ENCODE measurements at regions of chr1 and their contacts with region 1.

Region 1: DNA sequence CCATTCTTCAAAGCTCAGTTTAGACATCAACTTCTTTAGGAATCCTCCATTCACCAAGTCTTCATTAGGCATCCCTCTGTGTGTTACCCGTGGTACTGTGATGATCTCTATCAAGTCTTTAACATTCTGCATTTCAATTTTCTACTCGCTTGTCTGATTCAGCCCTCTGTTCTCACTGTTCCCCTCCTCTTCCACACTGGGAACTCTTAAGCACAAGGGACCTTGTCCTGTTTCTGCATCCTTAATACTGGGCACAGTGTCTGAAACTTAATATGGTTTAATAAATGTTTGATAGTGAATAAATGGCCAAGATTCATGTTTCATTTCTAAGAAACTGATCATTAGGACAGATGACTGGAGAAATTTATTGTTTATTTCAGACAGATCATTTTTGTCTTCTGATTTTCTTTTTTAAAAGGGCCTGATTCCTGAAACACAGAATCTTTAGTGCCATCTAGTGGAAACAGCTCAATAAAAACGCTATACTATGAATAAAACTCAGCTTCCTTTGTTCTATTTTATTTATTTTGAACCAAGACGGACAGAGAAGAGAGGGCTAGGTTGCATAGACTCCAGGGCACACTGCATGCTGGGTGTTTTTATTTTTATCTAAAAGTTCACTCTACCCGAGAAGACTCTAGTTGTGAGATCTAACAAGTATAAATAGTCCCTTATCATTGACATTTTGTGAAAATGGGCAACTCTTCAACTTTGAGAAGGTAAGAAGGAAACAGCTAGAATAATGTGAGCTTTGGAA is 7.0 kb upstream of the TRIM45 start:
- DNase-seq: no peak
- ATAC-seq: no peak
- H3K4me3 ChIP-seq: no peak overlapping the region
- H3K27ac ChIP-seq: no peak overlapping the region
- H3K4me1 ChIP-seq: no peaks in the 10 kb centered on the region
- H3K27me3 ChIP-seq: no peaks in the 10 kb centered on the region
- CTCF ChIP-seq: peak; percentile 22
- EP300 ChIP-seq: no peak
- POLR2A ChIP-seq: no peak
- RAD21 ChIP-seq: no peak

Region 2: GRCh38 chr1:117067533-117068370 is 60.7 kb before region 1 on chr1:
- CTCF ChIA-PET with region 1: interaction called, 23 read pairs
- POLR2A ChIA-PET with region 1: no interaction called
- in situ Hi-C with region 1: no loop called
- intact Hi-C with region 1: loop called (anchors 1 kb)
- DNase-seq: peak; percentile 34
- ATAC-seq: peak; percentile 94
- H3K4me3 ChIP-seq: no peak overlapping the region
- H3K27ac ChIP-seq: no peak overlapping the region
- H3K4me1 ChIP-seq: no peaks in the 10 kb centered on the region
- H3K27me3 ChIP-seq: no peaks in the 10 kb centered on the region
- CTCF ChIP-seq: peak; percentile 88
- EP300 ChIP-seq: no peak
- POLR2A ChIP-seq: no peak
- RAD21 ChIP-seq: peak; percentile 65; the same call in 1 of the 2 replicates

Region 3: GRCh38 chr1:117096871-117097842 is 31.3 kb before region 1 on chr1:
- CTCF ChIA-PET with region 1: no interaction called
- POLR2A ChIA-PET with region 1: no interaction called
- in situ Hi-C with region 1: no loop called
- intact Hi-C with region 1: no loop called
- DNase-seq: no peak
- ATAC-seq: no peak
- H3K4me3 ChIP-seq: no peak overlapping the region
- H3K27ac ChIP-seq: no peak overlapping the region
- H3K4me1 ChIP-seq: no peaks in the 10 kb centered on the region
- H3K27me3 ChIP-seq: no peaks in the 10 kb centered on the region
- CTCF ChIP-seq: no peak
- EP300 ChIP-seq: no peak
- POLR2A ChIP-seq: no peak
- RAD21 ChIP-seq: no peak

Region 4: GRCh38 chr1:117237696-117238381 is 109.3 kb after region 1 on chr1:
- CTCF ChIA-PET with region 1: no interaction called
- POLR2A ChIA-PET with region 1: no interaction called
- in situ Hi-C with region 1: no loop called
- intact Hi-C with region 1: no loop called
- DNase-seq: no peak
- ATAC-seq: no peak
- H3K4me3 ChIP-seq: no peak overlapping the region
- H3K27ac ChIP-seq: no peak overlapping the region
- H3K4me1 ChIP-seq: peaks cover 7% of the 10 kb centered on the region
- H3K27me3 ChIP-seq: no peaks in the 10 kb centered on the region
- CTCF ChIP-seq: no peak
- EP300 ChIP-seq: no peak
- POLR2A ChIP-seq: no peak
- RAD21 ChIP-seq: no peak